ENCODE measurements at regions of chr17 and their contacts with region 1.

Region 1: DNA sequence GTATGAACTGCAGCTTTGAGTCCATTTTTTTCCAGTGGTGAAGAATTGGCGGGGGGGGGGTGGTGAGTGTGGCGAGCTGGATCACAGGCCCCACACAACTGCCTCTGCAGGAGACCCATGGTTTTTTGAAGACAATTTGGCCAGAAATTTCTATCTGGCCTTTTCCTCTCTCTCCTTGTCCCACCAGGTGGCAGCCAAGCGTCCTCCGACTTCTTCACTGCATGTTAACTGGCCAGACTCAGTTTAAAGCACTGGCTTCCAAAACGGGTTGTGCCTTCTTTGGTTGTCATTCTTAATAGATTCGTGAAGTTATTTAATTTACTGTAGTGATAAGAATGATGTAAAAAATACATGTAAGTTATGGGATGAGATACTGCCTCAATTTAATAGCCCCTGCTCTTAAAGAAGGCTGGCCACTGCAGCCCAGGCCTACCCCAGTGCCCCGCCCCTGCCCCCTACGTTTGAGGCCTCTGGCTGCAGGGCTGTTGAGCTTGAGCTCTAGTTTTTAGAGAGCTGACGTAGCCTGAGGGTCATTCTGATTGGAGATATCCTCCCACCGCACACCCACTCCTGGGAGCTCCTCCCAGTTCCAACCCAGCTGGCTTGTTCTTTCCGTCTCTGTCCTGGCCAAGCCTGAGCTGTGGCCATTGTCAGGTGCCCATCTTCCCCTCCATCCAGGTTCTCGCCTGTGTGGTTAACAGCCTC is 36.4 kb downstream of the AKAP1 start:
- DNase-seq: peak; percentile 50 to 68 (median 58)
- ATAC-seq: peak; percentile 59
- H3K4me3 ChIP-seq: no peak overlapping the region
- H3K27ac ChIP-seq: peak overlapping the region in 3 of 4 donors; percentile 25 to 59 (median 27)
- H3K4me1 ChIP-seq: peaks cover 25% of the 10 kb centered on the region
- H3K27me3 ChIP-seq: no peaks in the 10 kb centered on the region
- CTCF ChIP-seq: peak; percentile 24 to 55 (median 41)
- POLR2A ChIP-seq: no peak

Region 2: DNA sequence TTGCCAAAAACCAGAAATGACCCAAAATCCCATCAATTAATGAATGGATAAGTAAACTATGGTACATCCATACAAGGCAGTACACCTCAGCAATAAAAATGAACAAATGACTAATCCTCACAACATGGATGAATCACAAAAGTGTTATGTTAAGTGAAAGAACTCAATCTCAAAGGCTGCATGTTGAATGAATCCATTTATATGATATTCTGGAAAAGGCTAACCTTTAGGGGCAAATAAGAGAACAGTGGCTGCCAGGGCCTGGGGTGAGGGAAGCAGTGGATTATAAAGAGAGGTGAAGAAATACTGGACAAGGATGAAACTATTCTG is 88.7 kb after region 1 on chr17:
- intact Hi-C with region 1: no loop called
- DNase-seq: no peak
- ATAC-seq: no peak
- H3K4me3 ChIP-seq: no peak overlapping the region
- H3K27ac ChIP-seq: no peak overlapping the region
- H3K4me1 ChIP-seq: no peaks in the 10 kb centered on the region
- H3K27me3 ChIP-seq: no peaks in the 10 kb centered on the region
- CTCF ChIP-seq: no peak
- POLR2A ChIP-seq: no peak

Region 3: GRCh38 chr17:57370037-57370581 is 248.6 kb after region 1 on chr17:
- intact Hi-C with region 1: no loop called
- DNase-seq: no peak
- ATAC-seq: peak; percentile 59
- H3K4me3 ChIP-seq: no peak overlapping the region
- H3K27ac ChIP-seq: peak overlapping the region; percentile 21 to 74 (median 65)
- H3K4me1 ChIP-seq: peaks cover 62% of the 10 kb centered on the region
- H3K27me3 ChIP-seq: no peaks in the 10 kb centered on the region
- CTCF ChIP-seq: no peak
- POLR2A ChIP-seq: no peak

Region 4: DNA sequence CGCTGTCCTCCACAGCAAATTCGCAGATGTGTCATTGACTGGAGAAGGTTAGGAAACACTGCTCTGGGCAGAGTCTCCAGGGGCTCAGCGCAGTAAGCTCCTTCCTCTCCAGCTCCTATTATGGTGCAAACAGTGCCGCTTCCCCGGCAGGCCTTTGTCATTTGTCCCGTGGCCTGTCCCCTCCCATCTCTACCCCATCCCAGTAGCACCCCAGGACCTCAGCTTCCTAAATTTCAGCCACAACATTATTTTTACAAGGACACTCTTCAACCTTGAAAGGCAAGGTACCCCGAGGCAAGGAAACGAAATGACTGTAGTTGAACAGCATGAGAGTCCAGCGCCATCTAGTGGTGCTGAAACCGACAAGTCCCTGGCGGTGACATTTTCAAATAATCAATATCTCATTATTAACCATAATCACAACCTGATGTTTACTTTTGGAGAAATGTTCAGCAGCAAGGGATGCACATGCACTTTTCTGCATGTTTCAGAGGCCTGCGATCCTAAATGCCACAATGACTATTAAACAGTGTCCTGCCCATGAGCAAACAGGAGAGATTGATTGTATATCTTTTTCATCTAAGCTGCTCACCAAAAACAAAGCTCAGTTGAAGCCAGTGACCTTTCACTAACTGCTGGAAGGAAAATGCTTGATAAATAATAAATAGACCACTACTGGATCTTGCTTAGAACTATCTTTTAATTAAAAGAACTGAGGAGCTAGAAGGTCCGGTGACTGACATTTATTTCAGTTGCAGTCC is 711.9 kb after region 1 on chr17:
- intact Hi-C with region 1: loop called (anchors 10 kb)
- DNase-seq: peak; percentile 71 to 78 (median 73)
- ATAC-seq: peak; percentile 78
- H3K4me3 ChIP-seq: no peak overlapping the region
- H3K27ac ChIP-seq: peak overlapping the region in 1 of 4 donors; percentile 13
- H3K4me1 ChIP-seq: peaks cover 17% of the 10 kb centered on the region
- H3K27me3 ChIP-seq: no peaks in the 10 kb centered on the region
- CTCF ChIP-seq: peak; percentile 82 to 94 (median 87)
- POLR2A ChIP-seq: no peak

Region 5: GRCh38 chr17:58112970-58113631 is 991.6 kb after region 1 on chr17:
- intact Hi-C with region 1: loop called (anchors 10 kb)
- DNase-seq: peak; percentile 81 to 90 (median 84)
- ATAC-seq: peak; percentile 89
- H3K4me3 ChIP-seq: no peak overlapping the region
- H3K27ac ChIP-seq: no peak overlapping the region
- H3K4me1 ChIP-seq: no peaks in the 10 kb centered on the region
- H3K27me3 ChIP-seq: no peaks in the 10 kb centered on the region
- CTCF ChIP-seq: peak; percentile 87 to 96 (median 93)
- POLR2A ChIP-seq: no peak